ENCODE measurements at regions of chr9 and their contacts with region 1.

Region 1: DNA sequence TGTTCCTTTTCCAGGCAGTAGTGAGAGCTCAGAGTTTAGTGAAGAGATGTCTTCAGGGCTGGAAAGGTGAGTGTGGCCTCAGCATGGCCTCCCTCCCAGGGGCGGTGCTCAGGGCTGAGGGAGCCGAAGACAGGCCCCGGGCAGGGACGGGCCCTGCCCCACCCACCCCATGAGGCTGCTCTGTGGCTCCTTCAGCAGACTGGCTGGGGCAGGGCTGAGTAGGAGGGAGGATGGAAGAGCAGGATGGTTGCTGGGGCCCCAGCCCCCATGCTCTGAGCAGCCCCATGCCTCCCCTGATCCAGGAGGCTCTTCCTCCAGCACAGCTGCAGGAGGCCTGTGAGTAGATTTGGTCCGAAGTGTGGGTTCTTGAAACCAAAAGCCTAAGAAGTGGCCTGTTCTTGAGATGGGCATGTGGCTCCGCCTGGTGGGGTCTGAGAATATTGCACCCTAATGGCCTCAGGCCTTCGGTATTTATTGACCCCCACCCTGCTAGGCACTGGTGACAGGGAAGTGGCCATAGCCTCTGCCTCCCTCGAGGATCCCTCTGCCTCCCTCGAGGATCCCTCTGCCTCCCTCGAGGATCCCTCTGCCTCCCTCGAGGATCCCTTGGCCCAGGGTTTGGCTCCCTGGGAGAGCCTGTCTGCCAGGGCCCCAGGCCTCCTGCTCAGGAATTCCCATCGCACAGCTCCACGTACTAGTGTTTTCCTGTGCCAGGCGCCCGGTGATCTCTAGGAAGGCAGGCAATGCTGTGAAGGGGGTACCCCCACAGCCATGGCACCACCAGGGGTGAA is 65.4 kb upstream of the GARNL3 start:
- DNase-seq: peak; percentile 83
- H3K4me3 ChIP-seq: no peak overlapping the region
- H3K27ac ChIP-seq: no peak overlapping the region
- H3K4me1 ChIP-seq: no peaks in the 10 kb centered on the region
- H3K27me3 ChIP-seq: no peaks in the 10 kb centered on the region
- CTCF ChIP-seq: peak; percentile 85

Region 2: GRCh38 chr9:126939821-126940221 is 259.4 kb before region 1 on chr9:
- CTCF ChIA-PET with region 1: interaction called, 13 read pairs
- POLR2A ChIA-PET with region 1: no interaction called
- intact Hi-C with region 1: loop called (anchors 1 kb)
- DNase-seq: no peak
- H3K4me3 ChIP-seq: no peak overlapping the region
- H3K27ac ChIP-seq: no peak overlapping the region
- H3K4me1 ChIP-seq: no peaks in the 10 kb centered on the region
- H3K27me3 ChIP-seq: no peaks in the 10 kb centered on the region
- CTCF ChIP-seq: no peak

Region 3: GRCh38 chr9:126965541-126966428 is 233.4 kb before region 1 on chr9:
- CTCF ChIA-PET with region 1: interaction called, 6 read pairs
- POLR2A ChIA-PET with region 1: no interaction called
- intact Hi-C with region 1: loop called (anchors 1 kb)
- DNase-seq: peak; percentile 74
- H3K4me3 ChIP-seq: no peak overlapping the region
- H3K27ac ChIP-seq: no peak overlapping the region
- H3K4me1 ChIP-seq: peaks cover 7% of the 10 kb centered on the region
- H3K27me3 ChIP-seq: no peaks in the 10 kb centered on the region
- CTCF ChIP-seq: peak; percentile 96

Region 4: DNA sequence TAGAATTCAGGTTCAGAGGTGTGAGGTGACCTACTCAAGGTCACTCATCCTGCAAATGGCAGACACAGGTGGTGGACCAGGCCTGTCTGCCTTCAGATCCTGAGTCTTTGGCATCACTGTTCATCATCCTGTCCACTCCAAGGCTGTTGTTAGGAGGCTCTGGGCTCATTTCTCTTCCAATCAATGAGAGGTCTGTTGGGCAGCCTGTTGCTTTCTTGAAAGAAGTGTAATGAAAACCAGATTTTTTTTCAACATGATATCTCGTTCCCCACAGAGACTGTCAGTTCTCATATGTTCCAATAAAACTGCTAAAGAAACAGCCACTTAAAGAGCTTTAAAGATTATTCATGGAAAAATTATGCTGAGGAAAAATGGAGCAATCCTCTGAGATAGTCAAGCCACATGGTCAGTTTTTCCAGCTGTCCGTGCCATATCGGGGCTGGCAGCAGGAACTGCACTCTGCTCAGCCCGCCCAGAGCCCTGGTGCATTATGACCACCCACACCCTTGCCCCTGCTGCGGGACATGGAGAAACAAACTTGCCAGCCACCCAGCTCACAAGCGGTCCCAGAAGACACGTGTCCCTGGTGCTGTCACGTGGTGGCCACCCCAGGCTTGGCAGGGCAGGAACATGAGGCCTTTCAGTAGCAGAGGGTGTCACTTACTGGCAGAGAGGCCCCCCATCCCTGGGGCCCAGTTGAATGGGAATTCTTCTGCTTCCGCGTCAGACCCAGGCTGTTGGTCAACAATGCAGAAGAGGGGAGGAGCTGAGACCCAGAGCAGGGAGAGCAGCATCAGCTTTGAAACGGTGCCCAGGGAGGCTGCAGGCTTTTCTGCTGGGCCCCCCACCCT is 13.0 kb before region 1 on chr9:
- CTCF ChIA-PET with region 1: no interaction called
- POLR2A ChIA-PET with region 1: no interaction called
- intact Hi-C with region 1: no loop called
- DNase-seq: no peak
- H3K4me3 ChIP-seq: no peak overlapping the region
- H3K27ac ChIP-seq: no peak overlapping the region
- H3K4me1 ChIP-seq: peaks cover 9% of the 10 kb centered on the region
- H3K27me3 ChIP-seq: no peaks in the 10 kb centered on the region
- CTCF ChIP-seq: no peak

Region 5: GRCh38 chr9:127214421-127215267 is 15.4 kb after region 1 on chr9:
- CTCF ChIA-PET with region 1: no interaction called
- POLR2A ChIA-PET with region 1: no interaction called
- intact Hi-C with region 1: no loop called
- DNase-seq: peak; percentile 45
- H3K4me3 ChIP-seq: no peak overlapping the region
- H3K27ac ChIP-seq: no peak overlapping the region
- H3K4me1 ChIP-seq: peaks cover 10% of the 10 kb centered on the region
- H3K27me3 ChIP-seq: no peaks in the 10 kb centered on the region
- CTCF ChIP-seq: peak; percentile 84